ENCODE measurements at regions of chr19 and their contacts with region 1.

Region 1: DNA sequence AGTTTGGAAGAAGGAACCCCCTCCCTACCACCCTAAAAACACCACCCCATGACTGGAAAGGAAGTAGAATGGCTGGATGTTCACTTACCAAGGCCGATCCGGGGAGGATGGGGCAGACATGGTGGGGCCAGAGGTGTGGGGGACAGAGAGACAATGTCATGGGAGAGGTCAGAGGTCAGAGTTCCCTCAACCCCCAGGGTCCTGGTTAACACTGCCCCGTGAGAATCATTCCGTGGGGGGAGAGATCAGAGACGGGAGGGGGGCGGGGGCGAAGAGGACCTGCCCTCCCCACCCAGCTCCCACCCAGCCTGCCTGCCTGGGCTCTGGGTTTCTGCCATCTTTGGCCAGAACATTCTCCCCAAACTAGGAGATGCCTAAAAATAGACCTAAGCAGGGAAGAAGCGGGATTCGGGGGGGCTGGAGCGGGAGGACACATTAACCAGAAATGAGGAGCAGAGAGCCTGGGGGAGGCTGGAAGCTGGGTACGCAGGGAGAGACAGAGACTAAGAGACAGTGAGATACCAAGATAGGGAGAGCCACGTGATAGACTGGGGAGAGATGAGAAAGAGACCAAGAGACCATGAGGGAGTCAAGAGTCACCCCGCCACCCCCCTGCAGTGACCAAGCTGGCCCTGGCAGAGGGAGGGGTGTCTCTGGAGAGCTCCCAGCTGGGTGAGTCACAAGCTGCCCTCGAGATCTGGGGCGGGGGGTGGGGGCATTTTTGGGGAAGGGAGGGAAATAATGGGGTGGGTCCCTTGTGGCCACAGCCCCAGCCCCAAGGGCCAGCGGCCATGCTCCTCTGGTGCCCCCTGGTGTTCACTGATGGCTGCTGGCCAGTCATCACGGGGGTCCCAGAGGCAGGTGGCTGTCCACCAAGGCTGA is 6.1 kb upstream of the KANK2 start:
- DNase-seq: no peak
- H3K4me3 ChIP-seq: peak overlapping the region in 2 of 4 donors; percentile 5 to 15
- H3K27ac ChIP-seq: peak overlapping the region; percentile 67 to 93 (median 88)
- H3K4me1 ChIP-seq: peaks cover 0 to 40% (median 12%) of the 10 kb centered on the region in 3 donors
- H3K27me3 ChIP-seq: no peaks in the 10 kb centered on the region
- CTCF ChIP-seq: peak; percentile 60 to 85 (median 68)
- POLR2A ChIP-seq: no peak

Region 2: GRCh38 chr19:11137542-11138384 is 65.7 kb before region 1 on chr19:
- intact Hi-C with region 1: loop called (anchors 5 kb)
- DNase-seq: no peak
- H3K4me3 ChIP-seq: peak overlapping the region in 3 of 4 donors; percentile 22 to 57 (median 34)
- H3K27ac ChIP-seq: peak overlapping the region; percentile 66 to 92 (median 90)
- H3K4me1 ChIP-seq: peaks cover 34 to 49% (median 36%) of the 10 kb centered on the region in 3 donors
- H3K27me3 ChIP-seq: peaks cover 0 to 12% (median 0%) of the 10 kb centered on the region in 4 donors
- CTCF ChIP-seq: peak; percentile 42 to 88 (median 84)
- POLR2A ChIP-seq: no peak

Measured in esophagus squamous epithelium (tissue), 5 donors.